ENCODE measurements at regions of chr7 and their contacts with region 1.

Region 1: DNA sequence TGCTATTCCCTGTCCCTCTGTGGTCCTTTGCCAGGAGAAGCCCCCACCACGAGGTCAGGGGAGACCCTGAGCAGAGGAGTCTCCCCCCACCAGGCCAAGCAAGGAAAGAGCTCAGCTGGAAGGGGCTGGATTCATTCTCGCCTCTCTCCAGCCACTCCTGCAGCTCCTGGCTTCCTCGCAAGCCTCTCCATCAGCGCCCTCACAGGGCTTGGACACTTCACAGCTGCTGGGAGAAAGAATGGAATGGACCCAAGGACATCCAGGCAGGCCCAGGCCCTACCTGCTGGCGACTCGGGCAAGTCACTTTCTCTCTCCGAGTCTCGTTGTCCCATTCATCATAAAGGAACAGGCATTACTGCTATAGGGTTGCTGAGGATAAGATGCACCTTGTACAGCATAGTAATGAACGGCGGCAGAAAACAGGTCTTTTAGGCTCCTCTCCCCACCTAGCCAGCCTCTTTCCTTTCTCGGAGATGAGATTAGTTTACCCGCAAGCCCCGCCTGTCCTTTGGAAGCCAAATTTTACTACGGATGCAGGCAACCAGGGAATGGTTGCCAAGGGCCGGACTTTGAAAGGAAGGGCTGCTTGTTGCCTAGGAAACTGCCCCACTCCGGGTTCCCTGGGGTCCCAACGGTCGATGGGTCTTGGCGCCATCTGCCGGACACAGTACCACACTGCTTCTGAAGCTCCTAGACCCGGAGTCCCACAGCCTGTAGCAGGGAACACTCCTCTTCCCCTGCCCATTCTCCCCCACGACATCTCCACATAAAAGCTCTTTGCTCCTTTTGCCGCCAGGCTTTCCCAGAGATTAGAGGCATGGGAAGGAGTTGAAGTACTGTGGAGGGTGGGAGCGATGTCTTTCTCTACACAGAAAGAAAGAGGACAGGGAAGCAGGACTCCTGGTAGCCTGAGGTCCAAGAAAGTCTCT is 22.3 kb downstream of the IMPDH1 start:
- DNase-seq: peak; percentile 83 to 92
- ATAC-seq: peak; percentile 75 to 94 (median 86)
- H3K4me3 ChIP-seq: no peak overlapping the region
- H3K27ac ChIP-seq: no peak overlapping the region
- H3K4me1 ChIP-seq: peaks cover 20% of the 10 kb centered on the region
- H3K27me3 ChIP-seq: no peaks in the 10 kb centered on the region
- CTCF ChIP-seq: peak; percentile 90

Region 2: DNA sequence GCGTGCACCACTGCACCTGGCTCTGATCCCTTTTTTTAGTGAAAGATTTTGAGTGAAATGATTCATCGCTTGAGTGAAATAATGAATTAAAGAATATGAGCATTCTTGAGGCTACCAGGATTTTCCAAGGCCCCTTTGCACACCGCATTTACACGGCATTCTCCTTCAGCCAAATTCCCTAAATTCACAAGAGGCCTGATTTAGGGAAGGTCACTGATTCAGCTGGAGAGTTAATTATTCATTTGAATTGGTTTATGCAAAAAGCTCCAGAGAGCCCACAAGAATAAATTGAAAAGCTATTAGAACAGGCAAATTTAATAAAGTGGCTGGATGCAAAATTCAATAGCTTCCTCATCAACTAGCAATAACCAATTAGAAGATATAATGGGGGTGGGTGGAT is 99.9 kb before region 1 on chr7:
- intact Hi-C with region 1: no loop called
- DNase-seq: no peak
- ATAC-seq: no peak
- H3K4me3 ChIP-seq: no peak overlapping the region
- H3K27ac ChIP-seq: no peak overlapping the region
- H3K4me1 ChIP-seq: no peaks in the 10 kb centered on the region
- H3K27me3 ChIP-seq: no peaks in the 10 kb centered on the region
- CTCF ChIP-seq: no peak

Region 3: GRCh38 chr7:128347647-128348097 is 39.8 kb before region 1 on chr7:
- intact Hi-C with region 1: loop called (anchors 1 to 2 kb)
- DNase-seq: peak; percentile 58 to 76
- ATAC-seq: peak; percentile 34 to 45 (median 37)
- H3K4me3 ChIP-seq: no peak overlapping the region
- H3K27ac ChIP-seq: no peak overlapping the region
- H3K4me1 ChIP-seq: peaks cover 5% of the 10 kb centered on the region
- H3K27me3 ChIP-seq: peaks cover 0 to 8% (median 0%) of the 10 kb centered on the region in 3 donors
- CTCF ChIP-seq: peak; percentile 79

Measured in psoas muscle (tissue), 8 donors.